ENCODE measurements at regions of chr11 and their contacts with region 1.

Region 1: DNA sequence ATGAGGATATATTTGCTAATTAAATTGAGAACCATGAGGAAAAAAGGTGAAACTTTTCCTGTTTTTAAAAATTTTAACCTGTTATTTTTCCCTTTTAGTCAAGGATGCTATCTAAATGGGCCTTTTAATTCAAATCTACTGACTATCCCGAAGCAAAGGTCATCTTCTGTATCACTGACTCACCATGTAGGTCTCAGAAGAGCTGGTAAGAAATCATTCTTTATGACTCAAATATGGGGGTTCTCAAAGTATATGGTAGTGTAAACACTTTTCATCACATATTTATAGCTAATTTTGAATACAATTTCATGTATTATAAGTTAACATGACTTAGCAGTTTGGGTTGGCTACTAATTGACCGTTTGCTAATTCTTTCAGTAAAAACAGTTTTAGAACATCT is 88.2 kb downstream of the CYP2R1 start:
- DNase-seq: no peak
- H3K4me3 Mint-ChIP-seq: no peak overlapping the region
- H3K27ac Mint-ChIP-seq: no peak overlapping the region
- H3K4me1 Mint-ChIP-seq: peaks cover 8% of the 10 kb centered on the region
- H3K27me3 Mint-ChIP-seq: no peaks in the 10 kb centered on the region

Region 2: GRCh38 chr11:14789879-14790484 is 13.9 kb before region 1 on chr11:
- CTCF ChIA-PET with region 1: interaction called, 11 read pairs
- POLR2A ChIA-PET with region 1: no interaction called
- DNase-seq: no peak
- H3K4me3 Mint-ChIP-seq: no peak overlapping the region
- H3K27ac Mint-ChIP-seq: no peak overlapping the region
- H3K4me1 Mint-ChIP-seq: peaks cover 14% of the 10 kb centered on the region
- H3K27me3 Mint-ChIP-seq: no peaks in the 10 kb centered on the region

Measured in activated CD4-positive, alpha-beta T cell treated with anti-CD3 and anti-CD28 coated beads, Interleukin-2, amount 10 ng/mL, durations not matched to agents 7 days and 5 days (primary cell).